AG04450 (cell line): ENCODE measurements at regions of chr14 and their contacts with region 1.

Region 1: GRCh38 chr14:29191092-29191491 is 424.5 kb downstream of the FOXG1 start:
- DNase-seq: no peak
- H3K4me3 ChIP-seq: no peak overlapping the region
- H3K27ac ChIP-seq: no peak overlapping the region
- H3K27me3 ChIP-seq: no peaks in the 10 kb centered on the region
- CTCF ChIP-seq: no peak

Region 2: DNA sequence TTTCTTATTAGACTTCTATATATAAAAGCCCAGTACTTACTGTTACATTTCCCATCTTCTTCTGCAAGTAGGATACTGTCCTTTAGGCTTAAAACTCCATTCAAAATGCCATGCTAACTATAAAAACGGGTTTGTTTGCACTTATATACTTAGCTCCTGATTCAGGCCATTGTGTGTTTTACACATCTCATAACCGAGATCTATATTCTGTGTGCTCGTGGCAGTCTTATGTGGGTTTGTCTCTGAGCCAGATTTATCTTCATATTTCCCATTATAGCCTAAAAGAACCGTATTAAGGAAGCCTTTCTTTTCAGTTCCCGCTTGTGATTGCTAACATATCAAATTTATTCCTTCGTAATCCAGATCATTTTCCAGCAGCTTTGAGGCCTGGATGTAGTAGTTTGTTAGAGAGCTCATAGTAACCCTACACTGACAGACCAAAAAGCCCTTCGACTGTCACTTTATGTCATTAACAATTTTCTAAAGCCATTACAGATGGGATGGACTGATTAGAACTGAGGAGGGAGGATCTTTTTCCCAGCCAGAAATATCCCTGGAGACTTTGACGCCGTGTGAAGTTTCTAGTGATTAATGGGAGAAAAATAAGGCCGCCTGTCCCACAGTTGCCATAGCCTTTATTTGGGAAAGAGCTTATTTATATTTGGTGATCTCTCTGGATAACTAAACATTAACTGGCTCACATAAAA is 84.0 kb after region 1 on chr14:
- CTCF ChIA-PET with region 1: interaction called, 10 read pairs
- POLR2A ChIA-PET with region 1: interaction called, 3 read pairs
- DNase-seq: no peak
- H3K4me3 ChIP-seq: no peak overlapping the region
- H3K27ac ChIP-seq: no peak overlapping the region
- H3K27me3 ChIP-seq: no peaks in the 10 kb centered on the region
- CTCF ChIP-seq: no peak